ENCODE measurements at regions of chr10 and their contacts with region 1.

Region 1: GRCh38 chr10:27019827-27020226 is 80.5 kb downstream of the ANKRD26 start:
- DNase-seq: no peak
- ATAC-seq: no peak
- H3K4me3 ChIP-seq: no peak overlapping the region
- H3K27ac ChIP-seq: no peak overlapping the region
- H3K4me1 ChIP-seq: no peaks in the 10 kb centered on the region
- H3K27me3 ChIP-seq: no peaks in the 10 kb centered on the region
- CTCF ChIP-seq: no peak

Region 2: DNA sequence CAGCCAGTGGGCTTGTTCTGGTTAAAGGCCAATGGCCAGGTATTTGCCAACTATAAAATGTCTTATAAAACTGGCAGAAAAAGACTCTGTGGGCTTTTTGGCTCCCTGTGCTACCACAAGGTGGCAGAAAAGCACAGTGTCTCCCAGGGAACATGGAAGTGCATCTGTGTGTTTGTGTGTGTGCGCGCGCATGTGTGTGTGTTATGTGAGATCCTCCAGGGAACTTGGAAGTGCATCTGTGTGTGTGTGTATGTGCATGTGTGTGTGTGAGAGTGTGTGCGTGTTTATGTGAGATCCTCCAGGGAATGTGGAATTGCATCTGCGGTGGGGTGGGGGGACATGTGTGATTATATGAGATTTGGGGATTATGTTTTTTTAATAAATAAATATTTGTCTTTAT is 128.9 kb before region 1 on chr10:
- CTCF ChIA-PET with region 1: no interaction called
- POLR2A ChIA-PET with region 1: no interaction called
- intact Hi-C with region 1: loop called (anchors 2 kb)
- DNase-seq: peak; percentile 82
- ATAC-seq: peak; percentile 75
- H3K4me3 ChIP-seq: no peak overlapping the region
- H3K27ac ChIP-seq: no peak overlapping the region
- H3K4me1 ChIP-seq: no peaks in the 10 kb centered on the region
- H3K27me3 ChIP-seq: no peaks in the 10 kb centered on the region
- CTCF ChIP-seq: peak; percentile 71

Region 3: DNA sequence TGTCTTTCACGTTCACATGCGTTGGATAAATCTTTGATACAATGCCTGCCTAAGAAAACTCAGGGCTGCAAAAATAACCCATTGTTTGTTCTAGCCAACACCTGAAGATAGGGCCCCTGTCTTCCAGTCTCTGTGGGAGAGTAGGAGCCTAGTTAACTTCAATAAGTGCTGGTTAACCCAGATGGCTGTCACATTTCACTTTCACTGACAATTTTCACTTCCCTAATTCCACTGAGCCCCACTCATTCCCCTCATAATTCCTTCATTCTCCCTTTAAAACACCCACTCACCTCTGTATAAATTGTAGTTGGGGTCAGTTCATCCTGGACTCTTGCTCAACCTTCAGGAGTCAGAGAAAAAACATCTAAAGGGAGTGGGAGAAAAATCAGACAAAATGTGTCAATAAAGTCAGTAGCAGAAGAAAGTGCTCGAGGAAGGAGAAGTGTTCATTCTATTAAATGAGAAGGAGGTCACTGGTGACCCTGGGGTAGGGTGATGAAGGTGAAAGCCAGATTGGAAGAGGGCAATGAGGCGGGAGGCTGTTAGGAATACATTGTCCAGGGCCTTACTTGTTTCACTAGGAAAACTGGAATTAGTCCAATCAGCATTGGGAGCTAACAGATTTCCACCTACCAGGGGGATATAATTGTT is 107.9 kb before region 1 on chr10:
- CTCF ChIA-PET with region 1: no interaction called
- POLR2A ChIA-PET with region 1: no interaction called
- intact Hi-C with region 1: loop called (anchors 10 kb)
- DNase-seq: no peak
- ATAC-seq: no peak
- H3K4me3 ChIP-seq: no peak overlapping the region
- H3K27ac ChIP-seq: no peak overlapping the region
- H3K4me1 ChIP-seq: peaks cover 4% of the 10 kb centered on the region; the same call in 1 of the 2 replicates
- H3K27me3 ChIP-seq: no peaks in the 10 kb centered on the region
- CTCF ChIP-seq: no peak

Region 4: DNA sequence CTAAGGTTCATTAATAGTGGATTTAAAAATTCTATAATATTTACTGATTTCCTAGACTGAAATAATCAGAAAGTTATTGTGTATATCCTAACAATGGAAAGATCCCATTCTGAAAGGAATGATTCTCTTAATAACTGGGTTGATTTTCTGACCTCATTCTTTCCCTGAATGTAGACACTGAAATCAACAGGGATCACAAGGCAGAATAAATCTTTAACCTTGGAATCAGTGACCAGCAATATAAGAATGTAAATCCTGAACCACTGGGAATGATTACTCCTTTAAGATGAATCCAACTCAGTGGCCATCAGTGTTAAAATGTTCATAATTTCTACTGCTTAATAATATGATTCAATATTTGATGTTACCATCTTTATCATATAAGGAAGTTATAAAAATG is 32.8 kb after region 1 on chr10:
- CTCF ChIA-PET with region 1: no interaction called
- POLR2A ChIA-PET with region 1: no interaction called
- intact Hi-C with region 1: no loop called
- DNase-seq: no peak
- ATAC-seq: no peak
- H3K4me3 ChIP-seq: no peak overlapping the region
- H3K27ac ChIP-seq: no peak overlapping the region
- H3K4me1 ChIP-seq: no peaks in the 10 kb centered on the region
- H3K27me3 ChIP-seq: no peaks in the 10 kb centered on the region
- CTCF ChIP-seq: no peak

Measured in PC-3 (cell line).